Right ventricle myocardium inferior (tissue), 1 donor: ENCODE measurements at regions of chr6 and their contacts with region 1.

Region 1: GRCh38 chr6:136289579-136290409 is at the start of gene BCLAF1:
- DNase-seq: peak; percentile 100
- ATAC-seq: peak; percentile 97
- total RNA-seq, gene BCLAF1: 61.0 TPM

Region 2: DNA sequence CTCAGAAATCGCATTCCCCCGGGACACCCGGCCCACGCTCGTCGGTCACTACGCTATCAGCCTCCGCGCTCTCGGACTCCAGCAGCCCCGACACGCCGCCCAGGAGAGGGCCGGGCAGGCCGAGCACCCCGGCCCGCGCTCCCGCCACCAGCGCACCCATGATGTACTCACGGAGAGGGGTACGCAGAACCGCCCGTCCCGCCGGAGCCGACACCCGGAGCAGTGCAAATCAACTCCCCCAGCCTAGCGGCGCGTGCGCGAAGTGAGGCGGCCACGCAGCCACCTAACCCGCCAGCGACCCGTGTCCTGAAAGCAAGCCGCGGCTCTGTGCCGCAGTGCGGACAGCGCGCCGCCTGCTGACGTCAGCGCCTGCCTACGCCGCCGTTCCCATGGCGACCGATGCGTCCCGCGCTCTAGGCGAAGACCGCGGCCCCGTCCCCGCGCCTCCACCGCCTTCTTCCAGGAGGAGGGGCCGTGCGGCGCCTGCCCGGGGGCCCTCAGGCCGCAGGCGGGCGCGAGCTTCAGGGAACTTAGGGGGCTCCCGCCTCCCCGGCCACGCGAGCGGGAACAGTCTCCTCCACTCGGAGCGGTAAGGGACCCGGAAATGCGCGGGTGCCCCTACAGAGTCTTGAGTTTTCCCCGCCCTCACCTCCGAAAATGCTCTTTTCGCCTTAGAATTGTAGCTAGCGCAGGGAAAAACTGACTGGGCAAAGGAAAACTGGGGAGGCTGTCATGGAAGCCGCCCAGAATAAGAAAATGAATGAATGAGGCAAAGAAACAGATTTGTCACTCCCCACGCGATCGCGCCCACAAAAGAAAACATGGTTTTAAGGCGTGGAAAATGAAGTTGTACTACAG is 792.2 kb before region 1 on chr6 and contains the start of gene AHI1:
- intact Hi-C with region 1: loop called (anchors 2 kb)
- DNase-seq: peak; percentile 98
- ATAC-seq: peak; percentile 97
- total RNA-seq, gene AHI1: 9.2 TPM

Region 3: DNA sequence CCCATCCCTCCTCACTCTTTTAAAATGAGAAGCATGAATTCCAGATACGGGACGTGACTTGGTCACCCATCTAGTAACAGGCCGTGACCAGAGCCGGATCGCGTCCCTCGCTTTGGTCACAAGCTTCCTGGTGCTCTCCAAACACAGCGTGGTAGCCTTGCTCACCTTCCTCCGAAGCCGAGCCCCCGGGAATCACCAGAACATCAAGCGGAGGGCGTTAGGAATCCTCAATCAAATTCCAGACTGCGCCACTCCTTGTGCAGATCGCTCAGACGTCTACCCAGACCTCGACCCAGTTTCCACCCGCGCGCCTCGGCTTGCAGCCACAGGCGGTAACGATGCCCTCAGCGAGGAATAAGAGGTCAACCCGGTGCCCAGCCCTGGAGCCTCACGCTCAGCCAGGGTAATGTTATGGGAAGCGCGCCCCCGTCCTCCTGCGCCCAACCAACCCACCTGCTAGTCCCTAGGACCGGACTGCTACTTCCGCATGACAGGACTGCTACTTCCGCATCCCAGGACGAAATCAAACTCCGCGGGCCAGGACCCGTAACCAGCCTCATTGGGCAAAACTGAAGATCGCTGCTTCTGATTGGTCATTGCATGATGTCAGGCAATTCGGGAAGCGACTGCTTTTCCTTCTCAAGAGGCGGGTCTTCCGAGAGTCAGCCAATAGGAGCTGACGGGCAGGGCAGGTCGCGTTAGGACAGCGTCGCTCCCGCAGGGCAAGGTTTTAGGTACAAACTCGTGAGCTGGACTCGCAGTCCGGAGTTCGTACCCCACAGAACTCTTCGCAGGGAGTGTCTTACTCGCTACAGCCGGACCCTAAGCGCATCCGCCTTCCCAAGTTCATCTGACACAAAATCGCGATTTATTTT is 39.7 kb before region 1 on chr6 and contains the start of gene MTFR2:
- intact Hi-C with region 1: loop called (anchors 1 kb)
- DNase-seq: peak; percentile 94
- ATAC-seq: peak; percentile 99
- total RNA-seq, gene MTFR2: 0.32 TPM